Sciatic nerve (tissue), 2 donors: ENCODE measurements at regions of chr3 and their contacts with region 1.

Region 1: GRCh38 chr3:79027593-79027992 is 740.2 kb downstream of the ROBO1 start:
- DNase-seq: no peak
- ATAC-seq: no peak

Region 2: GRCh38 chr3:78633626-78634025 is 394.0 kb before region 1 on chr3:
- intact Hi-C with region 1: no loop called
- DNase-seq: no peak
- ATAC-seq: no peak

Region 3: DNA sequence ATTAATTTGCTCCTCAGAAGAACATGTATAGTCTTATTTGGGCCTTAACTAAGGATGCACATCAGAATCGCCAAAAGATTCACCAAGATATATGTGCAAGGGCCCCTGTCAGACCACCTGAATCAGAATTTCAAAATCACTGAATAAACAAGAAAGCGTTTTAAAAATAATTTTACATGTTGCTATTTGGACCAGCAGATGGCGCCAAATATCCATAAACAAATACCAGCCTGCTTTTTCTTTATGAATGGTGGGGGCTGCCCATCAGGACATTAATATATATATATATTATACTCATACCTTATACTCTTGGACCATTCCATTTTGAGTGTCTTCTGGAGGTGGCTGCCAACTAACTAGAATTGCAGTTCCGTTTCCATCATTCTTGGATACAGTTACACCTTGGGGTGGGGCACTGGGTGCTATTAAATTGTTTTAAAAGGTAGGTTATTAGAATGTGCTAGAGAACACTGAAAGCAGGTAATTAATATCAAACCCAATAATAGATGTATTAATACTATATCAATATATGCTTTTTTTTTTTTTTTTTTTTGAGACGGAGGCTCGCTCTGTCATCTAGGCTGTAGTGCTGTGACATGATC is 368.1 kb before region 1 on chr3:
- intact Hi-C with region 1: loop called (anchors 5 kb)
- DNase-seq: no peak
- ATAC-seq: peak; percentile 18